ENCODE measurements at regions of chr1 and their contacts with region 1.

Region 1: DNA sequence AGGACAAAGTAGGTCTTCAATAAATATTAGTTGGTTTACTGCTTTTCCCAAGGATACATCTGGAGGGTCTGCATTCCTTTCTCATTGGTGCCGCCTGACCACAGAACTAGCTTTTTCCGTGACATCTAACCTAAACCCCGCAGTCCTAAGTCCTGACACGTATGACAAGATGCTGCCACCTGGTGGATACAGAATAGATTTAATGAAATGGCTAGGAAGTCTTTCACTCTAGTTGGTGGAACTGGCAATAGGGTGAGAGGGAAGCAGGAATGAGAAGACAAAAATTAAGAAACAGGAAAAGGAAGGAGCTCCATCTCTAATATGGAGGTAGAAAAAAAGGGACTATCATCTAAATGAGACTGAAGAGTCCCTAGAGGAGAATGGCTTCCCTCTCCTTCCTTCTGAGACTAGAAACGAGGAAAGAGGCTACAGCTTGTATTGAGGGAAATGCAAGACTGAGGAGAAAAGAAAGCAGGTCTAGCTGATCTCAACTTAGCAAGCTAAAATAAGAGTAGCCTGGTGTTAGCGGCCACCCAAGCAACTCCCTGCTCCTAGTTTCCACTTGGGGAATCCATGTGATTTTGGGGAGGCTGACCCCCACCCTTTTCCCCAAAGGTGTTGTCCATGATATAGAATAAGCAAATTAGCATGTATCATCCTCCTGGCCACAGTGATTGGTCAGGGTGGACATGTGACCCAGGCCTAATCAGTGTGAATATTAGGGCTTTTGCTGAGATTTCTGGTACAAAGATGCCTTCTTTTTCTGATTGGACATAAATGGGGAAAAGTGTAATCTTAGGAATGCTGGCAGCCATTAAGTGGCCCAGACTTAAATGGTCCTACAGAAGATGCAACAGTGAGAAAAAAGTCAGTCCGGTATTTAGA is 5.9 kb downstream of the RFX5 start:
- DNase-seq: peak; percentile 63
- H3K4me3 Mint-ChIP-seq: no peak overlapping the region
- H3K27ac Mint-ChIP-seq: peak overlapping the region; percentile 29
- H3K4me1 Mint-ChIP-seq: peaks cover 25% of the 10 kb centered on the region
- H3K27me3 Mint-ChIP-seq: no peaks in the 10 kb centered on the region

Region 2: GRCh38 chr1:151243683-151244216 is 97.4 kb before region 1 on chr1:
- CTCF ChIA-PET with region 1: no interaction called
- POLR2A ChIA-PET with region 1: no interaction called
- intact Hi-C with region 1: no loop called
- DNase-seq: no peak
- H3K4me3 Mint-ChIP-seq: no peak overlapping the region
- H3K27ac Mint-ChIP-seq: no peak overlapping the region
- H3K4me1 Mint-ChIP-seq: no peaks in the 10 kb centered on the region
- H3K27me3 Mint-ChIP-seq: no peaks in the 10 kb centered on the region

Region 3: GRCh38 chr1:151292207-151293030 is 48.7 kb before region 1 on chr1:
- CTCF ChIA-PET with region 1: interaction called, 229 read pairs
- POLR2A ChIA-PET with region 1: interaction called, 6 read pairs
- intact Hi-C with region 1: no loop called
- DNase-seq: no peak
- H3K4me3 Mint-ChIP-seq: no peak overlapping the region
- H3K27ac Mint-ChIP-seq: no peak overlapping the region
- H3K4me1 Mint-ChIP-seq: peaks cover 3% of the 10 kb centered on the region
- H3K27me3 Mint-ChIP-seq: no peaks in the 10 kb centered on the region

Region 4: DNA sequence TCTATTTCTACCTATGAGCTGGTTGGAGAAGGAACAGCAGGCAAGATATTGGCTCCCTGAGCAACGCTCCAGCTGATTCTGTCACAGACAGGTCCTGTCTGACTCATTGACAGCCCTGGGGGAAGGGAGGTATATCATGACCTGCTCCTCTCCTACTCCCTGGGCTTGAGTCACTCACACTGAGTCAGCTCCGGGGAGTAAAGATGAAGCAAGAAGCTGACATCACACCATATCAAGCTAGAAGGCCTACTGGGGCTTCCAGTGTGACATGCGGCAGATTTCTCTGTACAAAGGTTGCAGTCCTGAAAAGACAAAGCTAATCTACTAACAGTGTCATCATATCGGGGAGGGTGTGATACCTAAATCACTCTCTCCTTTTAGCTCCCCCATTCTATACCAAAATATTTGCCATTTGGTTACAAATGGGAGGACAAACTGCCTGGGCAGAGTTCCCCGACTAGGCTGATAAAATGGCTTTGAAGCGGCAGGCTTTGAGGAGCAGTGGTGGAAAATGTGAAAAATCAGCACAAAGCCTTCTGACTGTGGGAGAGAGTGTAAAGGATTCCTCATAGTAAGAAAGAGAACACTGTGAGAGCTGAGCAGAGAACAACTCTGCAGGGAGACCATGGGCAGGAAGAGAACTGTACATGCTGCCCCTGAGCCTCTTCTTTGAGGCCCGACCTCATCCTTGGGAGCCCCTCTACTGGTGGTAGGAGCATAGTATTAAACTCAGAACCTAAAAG is 29.4 kb before region 1 on chr1:
- CTCF ChIA-PET with region 1: interaction called, 88 read pairs
- POLR2A ChIA-PET with region 1: interaction called, 7 read pairs
- intact Hi-C with region 1: no loop called
- DNase-seq: peak; percentile 91
- H3K4me3 Mint-ChIP-seq: peak overlapping the region; percentile 1
- H3K27ac Mint-ChIP-seq: peak overlapping the region; percentile 97
- H3K4me1 Mint-ChIP-seq: peaks cover 41% of the 10 kb centered on the region
- H3K27me3 Mint-ChIP-seq: no peaks in the 10 kb centered on the region

Region 5: GRCh38 chr1:151327223-151327902 is 13.7 kb before region 1 on chr1 and contains the start of gene PI4KB:
- CTCF ChIA-PET with region 1: interaction called, 88 read pairs
- POLR2A ChIA-PET with region 1: interaction called, 10 read pairs
- intact Hi-C with region 1: no loop called
- DNase-seq: peak; percentile 93
- H3K4me3 Mint-ChIP-seq: peak within 1 kb of the TSS; percentile 95
- H3K27ac Mint-ChIP-seq: peak within 1 kb of the TSS; percentile 89
- H3K4me1 Mint-ChIP-seq: peaks cover 32% of the 10 kb centered on the region
- H3K27me3 Mint-ChIP-seq: no peaks in the 10 kb centered on the region
- total RNA-seq, gene PI4KB: 54.7 to 62.9 TPM

Region 6: DNA sequence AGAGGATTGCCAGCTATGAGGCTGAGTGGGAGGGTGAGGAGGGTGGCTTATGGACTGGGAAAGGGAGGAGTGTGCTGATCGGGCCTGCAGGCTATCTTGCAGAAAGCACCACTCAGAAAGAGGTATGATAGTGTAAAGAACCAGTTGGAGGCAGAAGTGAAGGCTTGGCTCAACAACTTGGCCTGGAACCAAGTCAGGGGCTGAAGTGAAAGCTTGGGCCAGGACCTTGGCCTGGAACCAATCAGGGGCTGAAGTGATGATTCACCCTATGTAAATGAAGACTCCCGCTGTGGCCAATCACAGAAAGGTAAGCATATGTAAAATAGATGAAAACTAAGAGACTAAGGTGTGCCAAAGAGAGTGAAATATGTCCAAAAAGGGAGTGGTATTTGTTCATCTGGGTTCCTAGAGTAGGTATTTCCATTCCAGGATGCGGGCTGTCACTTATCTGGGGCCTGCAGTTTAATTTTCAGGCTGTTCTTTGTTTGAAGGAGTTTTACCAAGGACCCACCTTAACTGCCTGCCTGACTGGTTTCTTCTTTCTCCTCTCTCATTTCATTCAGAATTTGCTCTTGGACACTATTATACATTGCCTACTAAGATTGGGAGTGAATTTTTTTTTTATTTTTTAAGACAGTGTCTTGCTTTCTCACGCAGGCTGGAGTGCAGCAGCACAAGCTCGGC is 11.0 kb after region 1 on chr1:
- CTCF ChIA-PET with region 1: interaction called, 31 read pairs
- POLR2A ChIA-PET with region 1: no interaction called
- intact Hi-C with region 1: no loop called
- DNase-seq: no peak
- H3K4me3 Mint-ChIP-seq: no peak overlapping the region
- H3K27ac Mint-ChIP-seq: no peak overlapping the region
- H3K4me1 Mint-ChIP-seq: peaks cover 10% of the 10 kb centered on the region
- H3K27me3 Mint-ChIP-seq: no peaks in the 10 kb centered on the region

Measured in activated CD4-positive, alpha-beta memory T cell treated with anti-CD3 and anti-CD28 coated beads for 36 hours (primary cell).